MCF 10A (cell line): ENCODE measurements at regions of chr19 and their contacts with region 1.

Region 1: GRCh38 chr19:35154525-35155406 is at the start of gene FXYD5:
- DNase-seq: peak; percentile 82
- H3K4me3 Mint-ChIP-seq: peak within 1 kb of the TSS; percentile 99
- H3K27ac Mint-ChIP-seq: peak within 1 kb of the TSS; percentile 93
- H3K4me1 Mint-ChIP-seq: peaks cover 22% of the 10 kb centered on the region
- H3K27me3 Mint-ChIP-seq: no peaks in the 10 kb centered on the region
- CTCF ChIP-seq: no peak
- total RNA-seq, gene FXYD5: 150 and 159 TPM in 2 replicates

Region 2: GRCh38 chr19:34974646-34975045 is 180.1 kb before region 1 on chr19:
- CTCF ChIA-PET with region 1: no interaction called
- POLR2A ChIA-PET with region 1: no interaction called
- intact Hi-C with region 1: no loop called
- DNase-seq: peak; percentile 32
- H3K4me3 Mint-ChIP-seq: no peak overlapping the region
- H3K27ac Mint-ChIP-seq: no peak overlapping the region
- H3K4me1 Mint-ChIP-seq: peaks cover 5% of the 10 kb centered on the region
- H3K27me3 Mint-ChIP-seq: peaks cover 10% of the 10 kb centered on the region
- CTCF ChIP-seq: no peak

Region 3: DNA sequence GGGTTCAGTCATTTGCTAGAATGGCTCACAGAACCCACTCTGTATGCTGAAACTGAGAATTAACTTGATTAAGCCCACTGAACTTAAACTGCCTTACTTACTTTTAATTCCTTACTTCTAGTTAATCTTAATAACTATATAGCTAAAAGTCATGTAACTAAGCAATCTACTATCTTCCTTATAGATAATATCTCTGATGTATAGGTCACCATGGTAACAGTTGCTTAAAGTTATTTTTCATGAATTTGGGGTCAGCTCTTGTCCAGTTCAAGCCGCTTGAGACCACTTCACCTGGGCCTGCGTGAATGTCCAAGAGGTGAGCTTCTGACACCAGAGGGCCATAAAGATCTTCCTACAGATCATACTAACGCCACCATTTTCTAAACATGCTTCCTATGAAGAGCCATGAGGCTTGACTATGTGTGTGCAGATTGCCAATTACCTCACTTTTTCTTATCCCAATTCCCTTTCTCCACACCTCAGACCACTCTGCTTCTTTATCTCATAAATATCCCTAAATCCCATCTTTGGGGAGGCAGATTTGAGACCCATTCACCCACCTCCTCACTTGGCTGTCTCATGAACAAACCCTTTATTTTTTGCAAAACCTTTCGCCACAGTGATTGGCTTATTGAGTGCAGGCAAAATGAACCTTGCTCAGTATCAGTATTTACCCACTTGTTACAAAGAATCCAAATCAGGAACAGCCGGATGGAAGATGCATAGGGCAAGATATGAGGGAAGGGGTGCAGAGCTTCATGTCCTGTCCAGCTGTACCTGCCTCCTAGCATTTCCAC is 39.3 kb after region 1 on chr19:
- CTCF ChIA-PET with region 1: no interaction called
- POLR2A ChIA-PET with region 1: no interaction called
- intact Hi-C with region 1: no loop called
- DNase-seq: no peak
- H3K4me3 Mint-ChIP-seq: no peak overlapping the region
- H3K27ac Mint-ChIP-seq: no peak overlapping the region
- H3K4me1 Mint-ChIP-seq: no peaks in the 10 kb centered on the region
- H3K27me3 Mint-ChIP-seq: peaks cover 23% of the 10 kb centered on the region
- CTCF ChIP-seq: no peak

Region 4: GRCh38 chr19:35247526-35248306 is 93.0 kb after region 1 on chr19:
- CTCF ChIA-PET with region 1: no interaction called
- POLR2A ChIA-PET with region 1: no interaction called
- intact Hi-C with region 1: loop called (anchors 1 kb)
- DNase-seq: peak; percentile 90
- H3K4me3 Mint-ChIP-seq: peak overlapping the region; percentile 92
- H3K27ac Mint-ChIP-seq: peak overlapping the region; percentile 99
- H3K4me1 Mint-ChIP-seq: peaks cover 16% of the 10 kb centered on the region
- H3K27me3 Mint-ChIP-seq: no peaks in the 10 kb centered on the region
- CTCF ChIP-seq: peak; percentile 51

Region 5: GRCh38 chr19:35269421-35270117 is 114.8 kb after region 1 on chr19:
- CTCF ChIA-PET with region 1: no interaction called
- POLR2A ChIA-PET with region 1: interaction called, 4 read pairs
- intact Hi-C with region 1: loop called (anchors 5 kb)
- DNase-seq: peak; percentile 86
- H3K4me3 Mint-ChIP-seq: peak overlapping the region; percentile 83
- H3K27ac Mint-ChIP-seq: no peak overlapping the region
- H3K4me1 Mint-ChIP-seq: peaks cover 15% of the 10 kb centered on the region
- H3K27me3 Mint-ChIP-seq: no peaks in the 10 kb centered on the region
- CTCF ChIP-seq: peak; percentile 94